MCF 10A (cell line): ENCODE measurements at regions of chr16 and their contacts with region 1.

Region 1: DNA sequence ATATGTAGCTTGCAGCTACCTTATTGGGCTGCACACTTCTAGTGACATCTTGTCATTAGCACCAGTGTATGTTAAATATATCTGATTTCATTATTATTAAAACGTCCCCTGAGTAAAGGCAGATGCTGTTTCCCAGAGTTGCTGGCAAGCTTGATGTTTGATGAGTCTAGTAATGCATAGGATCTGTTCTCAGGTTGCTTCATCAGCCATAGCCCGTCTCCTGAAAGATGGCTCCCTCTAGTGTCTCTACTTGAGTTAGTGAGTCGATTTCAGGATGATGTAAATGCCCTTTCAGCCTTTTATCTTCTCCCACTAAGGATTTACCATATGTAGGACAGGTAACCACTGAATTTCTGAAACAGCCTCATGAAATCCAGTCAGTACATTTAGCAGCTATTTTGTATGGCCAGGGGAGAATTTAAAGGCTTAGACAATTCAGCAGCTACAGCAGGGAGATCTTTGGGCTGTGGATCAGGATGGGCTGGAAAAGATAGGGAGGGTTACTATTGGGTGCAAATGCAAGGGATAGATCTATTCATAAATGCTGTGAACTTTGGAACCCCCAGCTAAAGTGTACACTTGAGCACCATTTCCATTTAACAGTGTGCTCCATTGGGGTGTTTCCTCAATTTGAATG is 376.3 kb downstream of the CNTNAP4 start:
- DNase-seq: peak; percentile 79
- H3K4me3 Mint-ChIP-seq: no peak overlapping the region
- H3K27ac Mint-ChIP-seq: no peak overlapping the region
- H3K4me1 Mint-ChIP-seq: peaks cover 11% of the 10 kb centered on the region
- H3K27me3 Mint-ChIP-seq: no peaks in the 10 kb centered on the region
- CTCF ChIP-seq: peak; percentile 77

Region 2: GRCh38 chr16:75801307-75801706 is 852.2 kb before region 1 on chr16:
- CTCF ChIA-PET with region 1: interaction called, 31 read pairs
- POLR2A ChIA-PET with region 1: no interaction called
- intact Hi-C with region 1: loop called (anchors 2 kb)
- DNase-seq: peak; percentile 22
- H3K4me3 Mint-ChIP-seq: no peak overlapping the region
- H3K27ac Mint-ChIP-seq: no peak overlapping the region
- H3K4me1 Mint-ChIP-seq: peaks cover 5% of the 10 kb centered on the region
- H3K27me3 Mint-ChIP-seq: no peaks in the 10 kb centered on the region
- CTCF ChIP-seq: peak; percentile 48

Region 3: GRCh38 chr16:76577003-76577402 is 76.5 kb before region 1 on chr16:
- CTCF ChIA-PET with region 1: no interaction called
- POLR2A ChIA-PET with region 1: no interaction called
- intact Hi-C with region 1: no loop called
- DNase-seq: no peak
- H3K4me3 Mint-ChIP-seq: no peak overlapping the region
- H3K27ac Mint-ChIP-seq: no peak overlapping the region
- H3K4me1 Mint-ChIP-seq: no peaks in the 10 kb centered on the region
- H3K27me3 Mint-ChIP-seq: no peaks in the 10 kb centered on the region
- CTCF ChIP-seq: no peak

Region 4: GRCh38 chr16:76639685-76640289 is 13.7 kb before region 1 on chr16:
- CTCF ChIA-PET with region 1: interaction called, 11 read pairs
- POLR2A ChIA-PET with region 1: no interaction called
- intact Hi-C with region 1: no loop called
- DNase-seq: peak; percentile 91
- H3K4me3 Mint-ChIP-seq: peak overlapping the region; percentile 28
- H3K27ac Mint-ChIP-seq: peak overlapping the region; percentile 71
- H3K4me1 Mint-ChIP-seq: peaks cover 24% of the 10 kb centered on the region
- H3K27me3 Mint-ChIP-seq: no peaks in the 10 kb centered on the region
- CTCF ChIP-seq: peak; percentile 37

Region 5: GRCh38 chr16:76882077-76882476 is 228.6 kb after region 1 on chr16:
- CTCF ChIA-PET with region 1: interaction called, 27 read pairs
- POLR2A ChIA-PET with region 1: no interaction called
- intact Hi-C with region 1: loop called (anchors 2 kb)
- DNase-seq: peak; percentile 56
- H3K4me3 Mint-ChIP-seq: no peak overlapping the region
- H3K27ac Mint-ChIP-seq: no peak overlapping the region
- H3K4me1 Mint-ChIP-seq: no peaks in the 10 kb centered on the region
- H3K27me3 Mint-ChIP-seq: no peaks in the 10 kb centered on the region
- CTCF ChIP-seq: peak; percentile 44